Right ventricle myocardium inferior (tissue), 1 donor: ENCODE measurements at regions of chr3 and their contacts with region 1.

Region 1: DNA sequence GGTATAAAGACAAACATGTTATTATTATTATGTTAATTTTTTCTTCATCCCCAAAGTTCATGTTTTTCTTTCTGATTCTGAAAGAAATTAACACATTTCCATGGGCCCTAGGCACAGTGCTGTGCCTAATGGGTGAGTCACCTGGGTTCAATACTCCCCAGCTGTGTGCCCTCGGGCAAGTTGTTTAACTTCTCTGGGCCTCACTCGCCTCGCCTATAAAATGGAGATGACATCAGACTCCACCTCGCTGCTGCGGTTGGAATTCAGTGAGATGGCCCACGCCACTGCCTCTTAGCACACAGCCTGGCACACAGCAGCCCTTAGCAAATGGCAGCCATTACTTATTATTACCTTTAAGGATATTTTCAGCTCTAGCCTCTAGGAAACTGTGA is 22.6 kb downstream of the DNASE1L3 start:
- DNase-seq: no peak
- ATAC-seq: no peak

Region 2: GRCh38 chr3:58217209-58217811 is 29.1 kb after region 1 on chr3:
- intact Hi-C with region 1: loop called (anchors 2 kb)
- DNase-seq: peak; percentile 79
- ATAC-seq: peak; percentile 90

Region 3: GRCh38 chr3:58299839-58300516 is 111.8 kb after region 1 on chr3:
- intact Hi-C with region 1: loop called (anchors 1 kb)
- DNase-seq: no peak
- ATAC-seq: no peak

Region 4: DNA sequence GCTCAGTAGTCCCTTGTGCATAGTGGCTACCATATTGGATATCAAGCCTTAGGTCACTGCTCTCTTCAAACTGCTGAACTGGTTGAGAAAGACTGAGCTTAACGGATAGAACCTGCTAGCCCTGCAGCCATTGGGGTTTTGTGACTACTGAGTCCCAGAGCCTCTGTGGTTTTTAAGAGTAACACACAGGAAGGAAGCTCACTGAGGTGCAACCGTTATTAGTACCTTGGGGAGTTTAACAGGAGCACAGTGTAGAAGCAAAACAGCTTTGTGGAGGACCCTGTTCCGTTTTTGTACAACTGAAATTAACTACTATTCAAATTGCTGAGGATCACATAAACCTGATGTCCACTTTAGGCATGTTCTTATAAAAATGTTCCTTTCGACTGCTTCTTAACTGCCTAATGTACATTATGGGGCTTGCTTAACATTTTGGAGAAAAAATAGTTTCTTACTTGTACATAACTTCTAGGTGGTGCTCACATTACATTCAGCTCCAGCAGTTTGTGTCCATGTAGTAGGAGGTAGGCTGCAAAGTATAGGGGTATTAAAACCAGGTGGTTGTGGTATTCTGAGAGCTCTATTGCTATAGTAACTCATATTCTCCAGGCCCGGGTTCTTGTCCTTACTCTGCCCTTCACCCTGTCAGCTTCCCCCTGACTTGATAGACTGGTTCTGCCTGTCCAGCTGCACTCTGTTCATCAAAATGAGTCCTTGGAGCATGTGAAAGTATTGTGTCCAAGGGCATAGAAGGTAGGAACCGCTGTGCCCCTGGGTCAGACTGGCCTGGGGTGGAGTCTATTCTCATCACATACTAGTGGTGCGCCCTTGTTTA is 161.8 kb after region 1 on chr3:
- intact Hi-C with region 1: no loop called
- DNase-seq: no peak
- ATAC-seq: peak; percentile 5